Common myeloid progenitor, CD34-positive (primary cell): ENCODE measurements at regions of chr11 and their contacts with region 1.

Region 1: GRCh38 chr11:110463153-110463552 is 33.4 kb downstream of the FDX1 start:
- DNase-seq: peak; percentile 43 to 67 (median 59)
- H3K4me3 ChIP-seq: no peak overlapping the region
- H3K27ac ChIP-seq: no peak overlapping the region
- H3K4me1 ChIP-seq: no peaks in the 10 kb centered on the region
- H3K27me3 ChIP-seq: no peaks in the 10 kb centered on the region

Region 2: DNA sequence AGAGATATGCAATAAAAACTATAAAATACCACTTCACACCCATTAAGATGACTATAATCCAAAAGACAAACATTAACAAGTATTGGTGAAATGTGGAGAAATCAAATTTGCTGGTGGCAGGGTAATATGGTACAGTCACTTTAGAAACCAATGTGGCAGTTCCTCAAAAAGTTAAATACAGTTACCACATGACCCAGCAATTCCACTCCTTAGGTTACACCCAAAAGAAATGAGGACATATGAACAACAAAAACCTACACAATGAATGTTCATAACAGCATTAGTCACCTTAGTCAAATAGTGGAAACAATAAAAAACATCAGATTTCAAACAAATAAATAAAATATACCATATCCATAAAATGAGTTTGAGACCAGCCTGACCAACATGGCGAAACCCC is 219.4 kb before region 1 on chr11:
- CTCF ChIA-PET with region 1: no interaction called
- POLR2A ChIA-PET with region 1: no interaction called
- DNase-seq: peak in 2 of 3 donors; percentile 31 to 57
- H3K4me3 ChIP-seq: no peak overlapping the region
- H3K27ac ChIP-seq: no peak overlapping the region
- H3K4me1 ChIP-seq: peaks cover 0 to 2% (median 0%) of the 10 kb centered on the region in 4 experiments
- H3K27me3 ChIP-seq: no peaks in the 10 kb centered on the region

Region 3: GRCh38 chr11:110479108-110480101 is 16.3 kb after region 1 on chr11:
- CTCF ChIA-PET with region 1: interaction called, 12 read pairs
- POLR2A ChIA-PET with region 1: no interaction called
- DNase-seq: peak; percentile 11 to 57 (median 46)
- H3K4me3 ChIP-seq: no peak overlapping the region
- H3K27ac ChIP-seq: no peak overlapping the region
- H3K4me1 ChIP-seq: peaks cover 3 to 21% (median 14%) of the 10 kb centered on the region in 4 experiments
- H3K27me3 ChIP-seq: no peaks in the 10 kb centered on the region

Region 4: DNA sequence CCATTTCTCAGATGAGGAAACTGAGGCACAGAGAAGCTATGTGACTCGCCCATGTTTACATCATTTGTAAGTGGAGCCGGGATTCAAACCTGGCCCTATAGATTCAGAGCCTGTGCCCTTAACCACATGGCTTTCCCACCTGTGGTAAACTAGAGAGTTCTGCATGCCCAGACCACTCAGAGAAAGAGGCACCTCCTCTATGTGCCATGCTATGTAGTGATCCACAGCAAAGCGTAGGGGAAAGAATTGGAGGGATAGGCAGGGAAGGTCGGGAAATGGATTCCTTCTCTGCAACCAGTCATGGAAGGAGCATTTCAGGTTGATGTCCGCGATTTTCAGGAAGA is 766.9 kb after region 1 on chr11:
- CTCF ChIA-PET with region 1: interaction called, 10 read pairs
- POLR2A ChIA-PET with region 1: no interaction called
- DNase-seq: no peak
- H3K4me3 ChIP-seq: peak overlapping the region in 5 of 7 experiments; percentile 51 to 83 (median 62)
- H3K27ac ChIP-seq: no peak overlapping the region
- H3K4me1 ChIP-seq: peaks cover 0 to 14% (median 12%) of the 10 kb centered on the region in 4 experiments
- H3K27me3 ChIP-seq: peaks cover 0 to 2% (median 0%) of the 10 kb centered on the region in 5 experiments